Heart right ventricle (tissue), 16 donors: ENCODE measurements at regions of chr5 and their contacts with region 1.

Region 1: GRCh38 chr5:56909294-56910209 is at the start of gene SETD9:
- DNase-seq: peak; percentile 98 to 99
- ATAC-seq: peak; percentile 94 to 98 (median 96)
- H3K4me3 ChIP-seq: peak within 1 kb of the TSS; percentile 48 to 90 (median 66)
- H3K27ac ChIP-seq: peak within 1 kb of the TSS; percentile 86 to 98 (median 94)
- H3K4me1 ChIP-seq: peaks cover 0 to 19% (median 10%) of the 10 kb centered on the region in 9 donors
- H3K27me3 ChIP-seq: no peaks in the 10 kb centered on the region
- CTCF ChIP-seq: no peak
- total RNA-seq, gene SETD9: 11.0 to 26.2 (median 16.8) TPM

Region 2: DNA sequence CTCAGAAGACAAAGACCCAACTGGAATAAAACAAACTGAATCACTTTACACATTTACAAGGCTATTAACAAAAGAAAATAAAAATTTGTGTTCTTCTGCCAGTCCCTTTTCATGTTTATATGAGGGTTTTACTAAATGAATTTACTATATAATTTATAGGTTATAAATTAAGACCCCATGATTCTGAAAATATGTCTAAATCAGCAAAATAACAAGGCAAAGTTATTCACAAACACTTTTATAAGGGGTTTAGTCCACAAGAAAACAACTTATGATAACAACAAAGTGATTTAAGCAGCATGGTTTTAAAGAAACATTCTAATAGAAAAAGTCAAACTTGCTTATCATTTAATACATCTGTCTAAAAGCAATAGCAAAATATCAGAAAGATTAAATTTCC is 37.5 kb after region 1 on chr5:
- intact Hi-C with region 1: loop called in 5 of 10 experiments (anchors 5 kb)
- DNase-seq: no peak
- ATAC-seq: no peak
- H3K4me3 ChIP-seq: no peak overlapping the region
- H3K27ac ChIP-seq: no peak overlapping the region
- H3K4me1 ChIP-seq: peaks cover 0 to 20% (median 17%) of the 10 kb centered on the region in 9 donors
- H3K27me3 ChIP-seq: no peaks in the 10 kb centered on the region
- CTCF ChIP-seq: no peak

Region 3: GRCh38 chr5:56951946-56952691 is 42.6 kb after region 1 on chr5 and contains the start of gene MIER3:
- intact Hi-C with region 1: loop called in 5 of 10 experiments (anchors 5 kb)
- DNase-seq: peak; percentile 75 to 83
- ATAC-seq: peak; percentile 89 to 96 (median 96)
- H3K4me3 ChIP-seq: peak within 1 kb of the TSS; percentile 66 to 96 (median 88)
- H3K27ac ChIP-seq: peak within 1 kb of the TSS; percentile 74 to 95 (median 86)
- H3K4me1 ChIP-seq: peaks cover 0 to 27% (median 18%) of the 10 kb centered on the region in 9 donors
- H3K27me3 ChIP-seq: peaks cover 0 to 31% (median 0%) of the 10 kb centered on the region in 7 donors
- CTCF ChIP-seq: no peak
- total RNA-seq, gene MIER3: 9.8 to 17.9 (median 13.0) TPM

Region 4: DNA sequence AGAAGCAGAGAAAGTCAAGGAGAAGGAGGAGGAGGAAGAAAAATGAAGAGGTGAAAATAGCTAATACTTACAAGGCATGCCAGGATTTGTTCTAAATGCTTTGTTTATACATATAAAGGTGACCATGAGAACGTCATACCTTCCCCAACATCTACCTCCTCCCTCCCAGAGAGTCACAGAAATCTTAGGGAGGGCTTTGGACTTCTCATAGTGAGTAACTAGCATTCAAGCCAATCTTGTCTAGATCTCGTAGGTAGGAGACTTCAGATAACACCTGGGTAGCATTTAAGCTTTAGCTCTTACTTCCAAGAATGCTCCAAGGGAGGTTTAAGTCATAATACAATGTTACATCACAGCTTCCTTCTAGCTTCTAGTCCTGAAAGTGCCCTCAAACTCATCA is 227.8 kb after region 1 on chr5:
- intact Hi-C with region 1: loop called in 7 of 10 experiments (anchors 5 to 10 kb)
- DNase-seq: no peak
- ATAC-seq: no peak
- H3K4me3 ChIP-seq: no peak overlapping the region
- H3K27ac ChIP-seq: no peak overlapping the region
- H3K4me1 ChIP-seq: no peaks in the 10 kb centered on the region
- H3K27me3 ChIP-seq: peaks cover 0 to 8% (median 0%) of the 10 kb centered on the region in 7 donors
- CTCF ChIP-seq: no peak

Region 5: GRCh38 chr5:57173185-57174127 is 263.9 kb after region 1 on chr5 and contains the start of gene GPBP1:
- intact Hi-C with region 1: loop called in 1 of 10 experiments (anchors 5 kb)
- DNase-seq: peak; percentile 98 to 100
- ATAC-seq: peak; percentile 92 to 97 (median 94)
- H3K4me3 ChIP-seq: peak within 1 kb of the TSS; percentile 61 to 98 (median 82)
- H3K27ac ChIP-seq: peak within 1 kb of the TSS; percentile 92 to 100 (median 98)
- H3K4me1 ChIP-seq: peaks cover 6 to 46% (median 41%) of the 10 kb centered on the region in 9 donors
- H3K27me3 ChIP-seq: no peaks in the 10 kb centered on the region
- CTCF ChIP-seq: peak in 3 of 9 donors; percentile 6 to 8 (median 8)
- total RNA-seq, gene GPBP1: 48.1 to 69.3 (median 51.6) TPM

Region 6: DNA sequence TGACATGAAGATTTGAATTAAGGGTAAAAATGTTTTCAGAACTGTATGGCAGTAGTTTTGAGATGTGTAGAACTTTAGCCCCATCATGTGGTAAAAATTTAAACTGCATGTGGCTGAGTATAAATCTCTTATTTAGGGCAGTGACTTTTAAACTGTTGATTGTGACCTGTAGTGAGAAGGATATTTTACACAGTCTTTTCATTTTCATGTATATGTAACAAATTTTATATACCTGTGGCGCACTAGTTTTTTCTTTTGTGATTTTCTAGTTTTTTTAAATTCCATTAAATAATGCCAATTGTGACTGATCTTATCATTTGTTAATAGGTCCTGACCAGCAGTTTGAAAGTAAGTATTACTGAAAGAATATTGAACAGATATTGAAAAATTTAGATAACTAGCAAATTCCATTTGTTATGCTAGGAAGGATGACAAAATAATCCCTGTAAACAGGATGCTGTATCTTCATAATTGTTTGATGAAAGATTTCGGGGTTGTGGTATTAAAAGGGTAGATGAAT is 311.6 kb after region 1 on chr5:
- intact Hi-C with region 1: loop called in 9 of 10 experiments (anchors 2 to 10 kb)
- DNase-seq: peak in 1 of 2 donors; percentile 48
- ATAC-seq: peak in 6 of 8 donors; percentile 29 to 79 (median 68)
- H3K4me3 ChIP-seq: no peak overlapping the region
- H3K27ac ChIP-seq: no peak overlapping the region
- H3K4me1 ChIP-seq: peaks cover 0 to 25% (median 15%) of the 10 kb centered on the region in 9 donors
- H3K27me3 ChIP-seq: no peaks in the 10 kb centered on the region
- CTCF ChIP-seq: peak; percentile 83 to 96 (median 92)